Transverse colon (tissue), 4 donors: ENCODE measurements at regions of chr22 and their contacts with region 1.

Region 1: GRCh38 chr22:36374603-36375024 is 13.2 kb downstream of the MYH9 start:
- DNase-seq: peak; percentile 66
- H3K4me3 ChIP-seq: no peak overlapping the region
- H3K27ac ChIP-seq: peak overlapping the region; percentile 96 to 100 (median 98)
- H3K4me1 ChIP-seq: peaks cover 72 to 100% (median 98%) of the 10 kb centered on the region in 4 donors
- H3K27me3 ChIP-seq: no peaks in the 10 kb centered on the region
- CTCF ChIP-seq: no peak
- EP300 ChIP-seq: no peak
- POLR2A ChIP-seq: no peak

Region 2: GRCh38 chr22:36325154-36326031 is 49.2 kb before region 1 on chr22:
- in situ Hi-C with region 1: no loop called
- intact Hi-C with region 1: loop called (anchors 2 kb)
- DNase-seq: peak; percentile 80
- H3K4me3 ChIP-seq: no peak overlapping the region
- H3K27ac ChIP-seq: peak overlapping the region; percentile 92 to 99 (median 96)
- H3K4me1 ChIP-seq: peaks cover 62 to 80% (median 72%) of the 10 kb centered on the region in 4 donors
- H3K27me3 ChIP-seq: no peaks in the 10 kb centered on the region
- CTCF ChIP-seq: no peak
- EP300 ChIP-seq: peak; percentile 54
- POLR2A ChIP-seq: peak; percentile 22

Region 3: GRCh38 chr22:36461669-36462649 is 87.3 kb after region 1 on chr22:
- in situ Hi-C with region 1: no loop called
- intact Hi-C with region 1: loop called (anchors 5 kb)
- DNase-seq: no peak
- H3K4me3 ChIP-seq: no peak overlapping the region
- H3K27ac ChIP-seq: peak overlapping the region; percentile 98
- H3K4me1 ChIP-seq: peaks cover 25 to 66% (median 53%) of the 10 kb centered on the region in 4 donors
- H3K27me3 ChIP-seq: no peaks in the 10 kb centered on the region
- CTCF ChIP-seq: no peak
- EP300 ChIP-seq: no peak
- POLR2A ChIP-seq: no peak

Region 4: DNA sequence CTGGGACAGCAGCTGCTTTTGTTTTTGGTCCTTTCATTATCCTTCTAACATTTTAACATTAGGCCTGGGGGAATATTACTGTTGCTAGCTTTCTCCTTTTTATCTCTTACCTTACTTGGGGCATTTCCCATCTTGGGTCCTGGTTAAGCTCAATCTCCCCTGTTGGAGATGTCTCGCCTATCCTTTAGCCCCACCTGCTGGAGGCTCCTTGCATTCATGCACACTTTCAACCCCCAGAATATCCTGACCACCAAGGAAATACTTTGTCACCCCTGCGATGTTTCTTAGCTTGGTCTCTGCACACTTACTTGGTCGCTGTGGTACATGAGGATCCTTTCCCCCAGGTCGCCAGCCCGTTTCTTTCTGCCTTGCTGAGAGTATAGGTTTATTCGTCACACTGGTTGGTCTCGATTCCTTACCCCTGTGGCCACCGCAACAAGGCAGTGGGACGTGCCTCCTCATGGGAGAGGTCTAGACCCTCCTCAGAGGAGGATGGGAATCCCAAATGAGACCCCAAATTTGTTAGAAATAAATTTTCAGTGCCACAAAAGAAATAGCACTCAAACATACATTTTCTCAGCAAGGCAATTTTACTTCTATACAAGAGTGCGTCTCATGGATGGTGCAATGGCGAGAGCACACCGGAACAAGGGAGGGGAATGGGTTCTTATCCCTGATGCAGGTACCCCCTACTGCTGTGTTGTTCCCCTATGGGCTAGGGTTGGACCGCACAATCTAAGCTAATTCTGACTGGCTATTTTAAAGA is 112.2 kb after region 1 on chr22:
- in situ Hi-C with region 1: no loop called
- intact Hi-C with region 1: no loop called
- DNase-seq: peak; percentile 58
- H3K4me3 ChIP-seq: no peak overlapping the region
- H3K27ac ChIP-seq: no peak overlapping the region
- H3K4me1 ChIP-seq: peaks cover 0 to 6% (median 3%) of the 10 kb centered on the region in 4 donors
- H3K27me3 ChIP-seq: no peaks in the 10 kb centered on the region
- CTCF ChIP-seq: peak; percentile 61 to 78 (median 71)
- EP300 ChIP-seq: no peak
- POLR2A ChIP-seq: no peak